ENCODE measurements at regions of chr1 and their contacts with region 1.

Region 1: DNA sequence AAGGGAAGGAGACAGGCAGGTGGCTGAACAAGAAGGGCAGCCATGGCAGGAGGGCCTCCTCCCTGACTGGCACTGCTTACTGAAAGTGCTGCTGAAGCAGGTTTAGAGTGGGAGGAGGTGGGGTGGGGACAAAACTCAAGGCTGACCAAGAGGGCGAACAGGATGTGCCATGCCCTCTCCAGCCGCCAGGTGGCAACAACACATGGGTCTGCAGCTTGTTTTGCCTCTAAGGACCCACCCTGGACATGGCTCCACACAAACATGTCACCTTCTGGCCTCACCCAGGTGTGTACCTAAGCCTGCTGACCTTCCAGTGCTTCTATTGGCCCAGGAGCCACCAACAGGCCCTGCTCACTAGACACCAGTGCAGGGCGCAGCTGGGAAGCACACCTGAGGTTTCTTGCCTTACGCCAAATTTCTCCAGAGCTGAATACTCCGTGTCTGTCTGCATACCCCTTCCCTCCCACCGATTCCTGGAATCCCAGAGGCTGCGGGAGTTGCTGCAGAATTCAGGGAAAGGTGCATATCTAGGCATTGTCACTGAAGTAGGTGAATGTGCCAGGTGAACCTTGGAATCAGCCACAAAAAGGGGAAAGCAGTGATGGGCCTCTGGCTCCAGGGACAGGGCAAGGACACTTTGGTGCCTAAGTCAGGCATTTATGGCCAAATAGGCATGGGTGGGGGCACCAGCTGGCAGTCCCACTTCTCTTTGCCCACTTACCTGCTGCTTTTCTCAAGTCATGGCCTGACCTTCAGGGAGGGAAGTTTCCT is 5.3 kb downstream of the PSRC1 start:
- DNase-seq: peak; percentile 81 to 94
- H3K4me3 ChIP-seq: no peak overlapping the region
- H3K27ac ChIP-seq: 0 out of 2 replicates have a peak overlapping the region, but pooled peaks have one; percentile 20
- H3K4me1 ChIP-seq: peaks cover 4 to 19% (median 10%) of the 10 kb centered on the region in 4 experiments; a peak in 6 of 7 replicates
- H3K27me3 ChIP-seq: no peaks in the 10 kb centered on the region
- CTCF ChIP-seq: peak; percentile 91 to 100 (median 99)
- EP300 ChIP-seq: no peak
- POLR2A ChIP-seq: no peak; a peak in 1 of 3 replicates
- RAD21 ChIP-seq: peak; percentile 88 to 89

Region 2: GRCh38 chr1:108983114-108983513 is 294.5 kb before region 1 on chr1:
- CTCF ChIA-PET with region 1: no interaction called
- POLR2A ChIA-PET with region 1: no interaction called
- DNase-seq: no peak
- H3K4me3 ChIP-seq: no peak overlapping the region
- H3K27ac ChIP-seq: no peak overlapping the region
- H3K4me1 ChIP-seq: no peaks in the 10 kb centered on the region
- H3K27me3 ChIP-seq: no peaks in the 10 kb centered on the region
- CTCF ChIP-seq: no peak
- EP300 ChIP-seq: no peak
- POLR2A ChIP-seq: no peak
- RAD21 ChIP-seq: no peak

Region 3: GRCh38 chr1:109213785-109214468 is 63.7 kb before region 1 on chr1 and contains the start of gene SARS1:
- CTCF ChIA-PET with region 1: interaction called, 10 read pairs
- POLR2A ChIA-PET with region 1: interaction called, 6 read pairs
- DNase-seq: peak in 1 of 2 experiments; percentile 91
- H3K4me3 ChIP-seq: peak within 1 kb of the TSS; percentile 88 to 99 (median 96)
- H3K27ac ChIP-seq: peak within 1 kb of the TSS; percentile 78
- H3K4me1 ChIP-seq: peaks cover 0 to 5% (median 2%) of the 10 kb centered on the region in 4 experiments; a peak in 2 of 7 replicates
- H3K27me3 ChIP-seq: no peaks in the 10 kb centered on the region
- CTCF ChIP-seq: no peak
- EP300 ChIP-seq: no peak
- POLR2A ChIP-seq: peak in 1 of 2 experiments; percentile 69; a peak in 1 of 3 replicates
- RAD21 ChIP-seq: no peak
- total RNA-seq, gene SARS1: 136 and 146 TPM in 2 replicates

Region 4: GRCh38 chr1:109248797-109249642 is 28.6 kb before region 1 on chr1 and contains the start of gene CELSR2:
- CTCF ChIA-PET with region 1: interaction called, 12 read pairs
- POLR2A ChIA-PET with region 1: interaction called, 6 read pairs
- DNase-seq: peak; percentile 66 to 90
- H3K4me3 ChIP-seq: peak within 1 kb of the TSS; percentile 28 to 62 (median 34); a peak in 7 of 8 replicates
- H3K27ac ChIP-seq: no peak within 1 kb of the TSS; the same call in 1 of the 2 replicates
- H3K4me1 ChIP-seq: peaks cover 0 to 23% (median 20%) of the 10 kb centered on the region in 4 experiments; a peak in 6 of 7 replicates
- H3K27me3 ChIP-seq: peaks cover 0 to 22% (median 16%) of the 10 kb centered on the region in 4 experiments; a peak in 5 of 7 replicates
- CTCF ChIP-seq: peak in 1 of 3 experiments; percentile 38; a peak in 2 of 4 replicates
- EP300 ChIP-seq: no peak
- POLR2A ChIP-seq: no peak
- RAD21 ChIP-seq: peak in 1 of 2 experiments; percentile 16; a peak in 1 of 4 replicates
- total RNA-seq, gene CELSR2: 27.7 and 28.0 TPM in 2 replicates

Region 5: GRCh38 chr1:109263597-109264398 is 13.8 kb before region 1 on chr1:
- CTCF ChIA-PET with region 1: interaction called, 46 read pairs
- POLR2A ChIA-PET with region 1: interaction called, 7 read pairs
- DNase-seq: peak; percentile 87 to 98
- H3K4me3 ChIP-seq: no peak overlapping the region; a peak in 1 of 8 replicates
- H3K27ac ChIP-seq: no peak overlapping the region
- H3K4me1 ChIP-seq: peaks cover 0 to 11% (median 3%) of the 10 kb centered on the region in 4 experiments; a peak in 4 of 7 replicates
- H3K27me3 ChIP-seq: no peaks in the 10 kb centered on the region
- CTCF ChIP-seq: peak in 2 of 3 experiments; percentile 100; a peak in 3 of 4 replicates
- EP300 ChIP-seq: no peak
- POLR2A ChIP-seq: no peak
- RAD21 ChIP-seq: peak; percentile 90 to 93

Region 6: DNA sequence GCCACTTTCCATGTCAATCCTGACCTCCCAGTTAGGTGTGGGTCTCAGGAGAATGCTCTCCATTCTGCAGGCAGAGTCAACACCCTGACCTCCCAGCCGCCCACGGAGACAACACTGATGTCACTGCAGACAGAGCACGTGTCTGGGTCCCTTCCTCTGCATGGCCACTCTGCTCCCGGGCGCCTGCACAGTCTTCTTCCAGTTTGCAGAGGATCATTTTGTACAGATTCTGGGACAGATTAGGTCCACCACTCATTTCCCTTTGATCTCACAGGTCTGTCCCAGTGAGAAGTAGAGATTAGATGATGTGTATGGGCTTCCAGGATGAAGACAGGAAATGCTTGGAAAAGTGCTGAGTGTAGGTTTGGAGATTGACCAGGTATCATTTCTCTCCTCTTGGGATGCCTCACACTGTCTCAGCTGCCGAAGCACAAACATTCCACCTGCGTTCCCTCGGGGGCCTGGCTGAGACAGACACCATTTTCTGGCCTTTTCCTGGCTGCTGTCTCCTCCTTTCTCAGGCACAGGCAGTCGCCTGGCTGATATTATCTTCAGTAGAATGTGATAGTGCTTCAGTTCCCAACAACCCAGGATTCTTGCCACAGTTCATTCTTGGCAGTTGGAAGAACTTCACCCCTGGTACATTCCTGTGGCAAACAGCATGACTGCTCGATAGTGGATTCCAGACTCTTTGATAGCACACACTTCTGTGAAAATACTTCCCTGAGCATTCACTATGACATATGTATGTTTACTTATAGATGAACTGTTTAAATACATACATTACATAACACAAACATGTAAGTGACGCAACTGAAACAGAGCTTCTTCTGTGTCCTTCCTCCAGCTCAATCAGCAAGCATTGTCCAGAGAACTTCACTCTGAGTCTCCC is 21.3 kb after region 1 on chr1:
- CTCF ChIA-PET with region 1: interaction called, 21 read pairs
- POLR2A ChIA-PET with region 1: interaction called, 11 read pairs
- DNase-seq: no peak
- H3K4me3 ChIP-seq: no peak overlapping the region
- H3K27ac ChIP-seq: no peak overlapping the region
- H3K4me1 ChIP-seq: peaks cover 0 to 4% (median 0%) of the 10 kb centered on the region in 4 experiments; a peak in 1 of 7 replicates
- H3K27me3 ChIP-seq: no peaks in the 10 kb centered on the region; a peak in 2 of 7 replicates
- CTCF ChIP-seq: no peak
- EP300 ChIP-seq: no peak
- POLR2A ChIP-seq: no peak
- RAD21 ChIP-seq: no peak

Region 7: DNA sequence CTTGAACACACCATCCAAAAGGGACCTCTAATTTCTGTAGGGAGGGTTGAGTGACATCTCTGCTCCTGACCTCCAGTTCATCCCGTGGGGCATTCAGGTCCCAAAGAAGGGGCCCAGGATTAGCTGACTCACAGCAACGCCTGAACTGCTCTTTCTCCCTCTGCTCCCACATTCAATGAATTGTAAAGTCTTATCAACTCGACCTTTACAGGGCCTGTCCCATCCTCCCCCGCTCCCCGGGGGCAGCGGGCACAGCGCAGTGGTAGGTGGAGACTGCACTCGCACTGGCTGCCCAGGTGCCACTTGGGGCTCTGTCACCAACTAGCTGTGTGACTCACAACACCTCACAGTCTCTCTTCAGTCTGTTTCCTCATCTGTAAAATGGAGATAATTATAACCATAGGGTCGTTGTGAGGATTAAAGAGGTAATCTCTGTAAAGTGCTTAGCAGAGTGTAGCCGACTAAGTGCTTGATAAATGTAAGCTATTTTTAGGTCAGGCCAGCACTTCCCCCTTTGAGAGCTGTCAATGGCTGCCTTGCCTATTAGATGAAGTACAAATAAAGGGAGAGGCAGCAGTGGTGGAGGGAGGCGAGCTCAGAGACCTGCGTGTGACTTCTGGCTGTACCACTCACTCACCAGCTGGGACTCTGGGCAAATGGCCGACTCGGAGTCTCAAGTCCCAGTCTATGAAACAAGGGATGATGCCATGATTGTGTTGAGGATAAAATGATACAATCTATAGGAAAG is 29.8 kb after region 1 on chr1:
- CTCF ChIA-PET with region 1: interaction called, 45 read pairs
- POLR2A ChIA-PET with region 1: interaction called, 8 read pairs
- DNase-seq: no peak
- H3K4me3 ChIP-seq: no peak overlapping the region
- H3K27ac ChIP-seq: no peak overlapping the region
- H3K4me1 ChIP-seq: peaks cover 0 to 9% (median 3%) of the 10 kb centered on the region in 4 experiments; a peak in 2 of 7 replicates
- H3K27me3 ChIP-seq: no peaks in the 10 kb centered on the region
- CTCF ChIP-seq: no peak
- EP300 ChIP-seq: no peak
- POLR2A ChIP-seq: no peak
- RAD21 ChIP-seq: no peak

Region 8: DNA sequence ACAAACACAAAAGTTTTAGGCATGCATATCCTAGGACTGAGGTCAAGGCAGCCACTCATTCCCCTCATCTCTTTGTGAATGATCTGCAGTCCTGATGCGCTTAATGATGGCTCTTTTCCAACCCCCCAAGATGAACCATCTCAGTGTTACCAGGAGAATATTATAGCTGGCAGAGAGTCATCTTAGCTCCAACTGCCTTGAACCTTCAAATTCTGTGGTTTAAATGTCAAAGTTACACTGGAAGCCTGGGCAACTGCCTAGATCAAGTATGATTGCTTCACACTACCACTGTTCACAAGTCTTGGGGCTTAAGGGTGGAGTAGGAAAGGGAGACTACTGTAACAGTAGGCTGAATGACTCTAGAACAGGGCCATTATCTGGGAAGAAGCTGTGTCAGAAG is 37.2 kb after region 1 on chr1:
- CTCF ChIA-PET with region 1: interaction called, 13 read pairs
- POLR2A ChIA-PET with region 1: interaction called, 3 read pairs
- DNase-seq: no peak
- H3K4me3 ChIP-seq: no peak overlapping the region
- H3K27ac ChIP-seq: no peak overlapping the region
- H3K4me1 ChIP-seq: no peaks in the 10 kb centered on the region; a peak in 1 of 7 replicates
- H3K27me3 ChIP-seq: no peaks in the 10 kb centered on the region
- CTCF ChIP-seq: no peak
- EP300 ChIP-seq: no peak
- POLR2A ChIP-seq: no peak
- RAD21 ChIP-seq: no peak

Region 9: DNA sequence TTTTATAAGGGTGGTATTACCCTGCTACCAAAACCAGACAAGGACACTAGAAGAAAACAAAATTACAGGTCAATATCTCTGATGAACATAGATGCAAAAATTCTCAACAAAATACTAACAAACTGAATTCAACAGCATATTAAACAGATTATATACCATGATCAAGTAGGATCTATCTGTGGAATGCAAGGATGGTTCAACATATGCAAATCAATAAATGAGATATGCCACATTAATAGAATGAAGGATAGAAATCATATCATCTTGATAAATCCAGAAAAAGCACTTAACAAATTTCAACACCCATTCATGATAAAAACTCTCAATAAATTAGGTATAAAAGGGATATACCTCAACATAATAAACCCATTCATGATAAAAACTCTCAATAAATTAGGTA is 53.5 kb after region 1 on chr1:
- CTCF ChIA-PET with region 1: no interaction called
- POLR2A ChIA-PET with region 1: no interaction called
- DNase-seq: no peak
- H3K4me3 ChIP-seq: no peak overlapping the region
- H3K27ac ChIP-seq: no peak overlapping the region
- H3K4me1 ChIP-seq: no peaks in the 10 kb centered on the region
- H3K27me3 ChIP-seq: no peaks in the 10 kb centered on the region
- CTCF ChIP-seq: no peak
- EP300 ChIP-seq: no peak
- POLR2A ChIP-seq: no peak
- RAD21 ChIP-seq: no peak

Measured in H1 (cell line).